CD8-positive, alpha-beta T cell (primary cell): ENCODE measurements at regions of chr7 and their contacts with region 1.

Region 1: GRCh38 chr7:143299840-143300239 is 11.7 kb downstream of the CASP2 start:
- DNase-seq: peak; percentile 42 to 76 (median 69)
- ATAC-seq: peak; percentile 100
- H3K4me3 ChIP-seq: no peak overlapping the region
- H3K4me3 Mint-ChIP-seq: no peak overlapping the region
- H3K27ac ChIP-seq: no peak overlapping the region
- H3K27ac Mint-ChIP-seq: no peak overlapping the region
- H3K4me1 ChIP-seq: peaks cover 9% of the 10 kb centered on the region
- H3K4me1 Mint-ChIP-seq: peaks cover 31% of the 10 kb centered on the region
- H3K27me3 ChIP-seq: no peaks in the 10 kb centered on the region
- H3K27me3 Mint-ChIP-seq: no peaks in the 10 kb centered on the region
- CTCF ChIP-seq: peak; percentile 80

Region 2: GRCh38 chr7:142898377-142899170 is 401.3 kb before region 1 on chr7:
- CTCF ChIA-PET with region 1: no interaction called
- POLR2A ChIA-PET with region 1: no interaction called
- intact Hi-C with region 1: no loop called
- DNase-seq: no peak
- ATAC-seq: no peak
- H3K4me3 ChIP-seq: no peak overlapping the region
- H3K4me3 Mint-ChIP-seq: no peak overlapping the region
- H3K27ac ChIP-seq: no peak overlapping the region
- H3K27ac Mint-ChIP-seq: no peak overlapping the region
- H3K4me1 ChIP-seq: no peaks in the 10 kb centered on the region
- H3K4me1 Mint-ChIP-seq: no peaks in the 10 kb centered on the region
- H3K27me3 ChIP-seq: peaks cover 0 to 4% of the 10 kb centered on the region in 2 experiments
- H3K27me3 Mint-ChIP-seq: peaks cover 8% of the 10 kb centered on the region
- CTCF ChIP-seq: no peak

Region 3: GRCh38 chr7:143248761-143249354 is 51.0 kb before region 1 on chr7:
- CTCF ChIA-PET with region 1: interaction called, 180 read pairs
- POLR2A ChIA-PET with region 1: interaction called, 5 read pairs
- intact Hi-C with region 1: no loop called
- DNase-seq: no peak
- ATAC-seq: no peak
- H3K4me3 ChIP-seq: no peak overlapping the region
- H3K4me3 Mint-ChIP-seq: no peak overlapping the region
- H3K27ac ChIP-seq: no peak overlapping the region
- H3K27ac Mint-ChIP-seq: peak overlapping the region; percentile 73
- H3K4me1 ChIP-seq: peaks cover 60% of the 10 kb centered on the region
- H3K4me1 Mint-ChIP-seq: peaks cover 79% of the 10 kb centered on the region
- H3K27me3 ChIP-seq: no peaks in the 10 kb centered on the region
- H3K27me3 Mint-ChIP-seq: no peaks in the 10 kb centered on the region
- CTCF ChIP-seq: no peak

Region 4: DNA sequence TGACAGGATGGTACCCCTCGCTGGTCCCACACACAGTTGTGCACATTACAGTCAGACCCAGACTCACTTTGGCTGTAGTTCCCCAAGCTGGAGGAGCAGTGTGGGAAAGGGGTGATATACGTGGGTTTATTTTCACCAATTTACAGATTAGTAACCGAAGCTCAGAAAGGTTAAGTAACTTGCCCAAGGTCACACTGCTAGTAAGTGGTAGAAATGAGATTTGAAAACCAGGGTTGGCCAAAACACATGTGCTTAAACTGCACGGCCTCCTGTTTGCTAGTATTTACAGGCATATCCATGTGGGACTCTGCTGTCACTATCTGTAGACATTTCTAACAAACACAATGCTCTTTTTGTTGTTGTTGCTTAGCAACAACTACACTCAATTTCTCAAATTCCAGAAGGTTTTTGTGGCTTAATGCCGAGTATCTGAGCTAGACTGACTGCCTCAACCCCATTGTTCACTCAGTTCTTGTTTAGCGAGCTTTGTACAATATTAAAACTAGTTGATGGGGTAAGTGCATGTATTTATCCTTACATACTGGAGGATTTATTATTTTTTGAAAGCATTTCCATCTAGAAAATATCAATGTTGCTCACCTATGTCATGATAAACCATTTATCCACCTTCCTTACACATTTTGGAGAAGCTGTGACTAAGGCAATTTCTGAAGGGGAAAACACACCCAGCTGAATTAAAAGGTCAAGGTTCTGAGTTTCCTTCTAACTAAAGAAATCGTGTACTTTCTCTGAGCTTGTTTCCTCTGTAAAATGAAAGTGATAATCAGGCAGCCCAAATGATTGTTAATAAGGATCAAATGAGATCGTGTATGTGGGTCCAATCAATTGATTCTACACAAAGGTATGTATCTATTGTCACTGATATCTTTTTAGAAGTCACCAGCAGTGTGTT is 20.4 kb before region 1 on chr7:
- CTCF ChIA-PET with region 1: interaction called, 12 read pairs
- POLR2A ChIA-PET with region 1: no interaction called
- intact Hi-C with region 1: no loop called
- DNase-seq: peak in 2 of 9 experiments; percentile 43 to 64
- ATAC-seq: peak; percentile 63
- H3K4me3 ChIP-seq: peak overlapping the region in 1 of 2 experiments; percentile 4
- H3K4me3 Mint-ChIP-seq: peak overlapping the region; percentile 70
- H3K27ac ChIP-seq: peak overlapping the region; percentile 4 to 54
- H3K27ac Mint-ChIP-seq: peak overlapping the region; percentile 82
- H3K4me1 ChIP-seq: peaks cover 24% of the 10 kb centered on the region
- H3K4me1 Mint-ChIP-seq: peaks cover 34% of the 10 kb centered on the region
- H3K27me3 ChIP-seq: no peaks in the 10 kb centered on the region
- H3K27me3 Mint-ChIP-seq: no peaks in the 10 kb centered on the region
- CTCF ChIP-seq: no peak

Region 5: GRCh38 chr7:143287935-143288826 is 11.7 kb before region 1 on chr7 and contains the start of gene CASP2:
- CTCF ChIA-PET with region 1: interaction called, 20 read pairs
- POLR2A ChIA-PET with region 1: interaction called, 4 read pairs
- intact Hi-C with region 1: loop called in 1 of 2 experiments (anchors 1 kb)
- DNase-seq: peak; percentile 96 to 100 (median 99)
- ATAC-seq: peak; percentile 96
- H3K4me3 ChIP-seq: peak within 1 kb of the TSS; percentile 91 to 95
- H3K4me3 Mint-ChIP-seq: peak within 1 kb of the TSS; percentile 93
- H3K27ac ChIP-seq: peak within 1 kb of the TSS; percentile 64 to 72
- H3K27ac Mint-ChIP-seq: peak within 1 kb of the TSS; percentile 91
- H3K4me1 ChIP-seq: peaks cover 40% of the 10 kb centered on the region
- H3K4me1 Mint-ChIP-seq: peaks cover 53% of the 10 kb centered on the region
- H3K27me3 ChIP-seq: no peaks in the 10 kb centered on the region
- H3K27me3 Mint-ChIP-seq: no peaks in the 10 kb centered on the region
- CTCF ChIP-seq: peak; percentile 31
- total RNA-seq, gene CASP2: 16.0 to 19.1 TPM

Region 6: GRCh38 chr7:143337216-143337615 is 37.4 kb after region 1 on chr7:
- CTCF ChIA-PET with region 1: interaction called, 10 read pairs
- POLR2A ChIA-PET with region 1: no interaction called
- intact Hi-C with region 1: no loop called
- DNase-seq: no peak
- ATAC-seq: no peak
- H3K4me3 ChIP-seq: no peak overlapping the region
- H3K4me3 Mint-ChIP-seq: no peak overlapping the region
- H3K27ac ChIP-seq: no peak overlapping the region
- H3K27ac Mint-ChIP-seq: no peak overlapping the region
- H3K4me1 ChIP-seq: no peaks in the 10 kb centered on the region
- H3K4me1 Mint-ChIP-seq: no peaks in the 10 kb centered on the region
- H3K27me3 ChIP-seq: peaks cover 0 to 6% of the 10 kb centered on the region in 2 experiments
- H3K27me3 Mint-ChIP-seq: peaks cover 22% of the 10 kb centered on the region
- CTCF ChIP-seq: no peak

Region 7: GRCh38 chr7:143372070-143372469 is 72.2 kb after region 1 on chr7:
- CTCF ChIA-PET with region 1: interaction called, 24 read pairs
- POLR2A ChIA-PET with region 1: no interaction called
- intact Hi-C with region 1: loop called in 1 of 2 experiments (anchors 5 kb)
- DNase-seq: peak; percentile 36 to 81 (median 71)
- ATAC-seq: peak; percentile 33
- H3K4me3 ChIP-seq: no peak overlapping the region
- H3K4me3 Mint-ChIP-seq: peak overlapping the region; percentile 24
- H3K27ac ChIP-seq: peak overlapping the region in 1 of 2 experiments; percentile 36
- H3K27ac Mint-ChIP-seq: peak overlapping the region; percentile 75
- H3K4me1 ChIP-seq: peaks cover 58% of the 10 kb centered on the region
- H3K4me1 Mint-ChIP-seq: peaks cover 55% of the 10 kb centered on the region
- H3K27me3 ChIP-seq: no peaks in the 10 kb centered on the region
- H3K27me3 Mint-ChIP-seq: no peaks in the 10 kb centered on the region
- CTCF ChIP-seq: peak; percentile 18

Region 8: DNA sequence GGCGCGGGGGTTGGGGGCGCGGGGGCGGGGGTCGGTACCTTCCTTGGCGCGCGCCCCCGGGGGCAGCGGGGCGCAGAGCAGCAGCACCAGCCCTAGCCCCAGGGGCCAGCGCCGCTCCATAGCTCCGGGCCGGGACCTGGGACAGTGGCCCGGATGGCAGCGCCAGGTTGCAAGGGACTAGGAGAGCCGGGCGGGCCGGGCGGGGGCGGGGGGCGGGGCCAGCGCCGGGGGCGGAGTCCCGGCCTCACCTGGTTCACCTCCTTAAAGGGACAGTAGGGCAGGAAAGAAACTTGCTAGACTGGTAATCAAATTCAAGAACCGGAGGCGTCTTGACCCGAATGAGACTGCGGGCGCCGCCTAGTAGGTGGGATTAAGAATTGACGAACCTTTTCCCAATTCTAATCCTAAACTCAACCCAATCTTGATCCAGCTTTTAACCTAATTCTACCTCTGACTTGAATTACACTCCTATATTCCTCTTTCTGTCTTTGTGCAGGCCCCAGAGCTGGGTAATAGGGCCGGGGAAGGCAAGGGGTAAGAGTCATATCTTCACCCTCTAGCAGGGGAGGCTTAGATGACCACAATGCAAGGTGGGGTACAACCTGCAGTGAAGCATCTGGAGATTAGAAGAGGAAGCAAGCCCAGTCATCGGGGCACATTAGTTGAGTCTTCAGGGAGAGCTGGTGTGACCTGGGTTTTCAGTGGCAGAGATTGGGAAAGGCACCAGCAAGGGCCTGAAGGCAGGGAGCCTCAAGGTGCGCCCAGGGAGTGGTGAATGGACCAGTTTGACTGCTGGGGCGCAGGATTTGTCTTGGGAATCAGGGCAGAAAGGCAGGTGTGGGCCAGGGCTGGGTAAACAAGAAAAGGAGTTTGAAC is 109.1 kb after region 1 on chr7 and contains the start of gene EPHA1:
- CTCF ChIA-PET with region 1: interaction called, 9 read pairs
- POLR2A ChIA-PET with region 1: interaction called, 3 read pairs
- intact Hi-C with region 1: loop called (anchors 5 kb)
- DNase-seq: peak; percentile 14 to 77 (median 52)
- ATAC-seq: peak; percentile 71
- H3K4me3 ChIP-seq: peak within 1 kb of the TSS; percentile 56 to 58
- H3K4me3 Mint-ChIP-seq: peak within 1 kb of the TSS; percentile 95
- H3K27ac ChIP-seq: peak within 1 kb of the TSS; percentile 22 to 38
- H3K27ac Mint-ChIP-seq: peak within 1 kb of the TSS; percentile 91
- H3K4me1 ChIP-seq: peaks cover 48% of the 10 kb centered on the region
- H3K4me1 Mint-ChIP-seq: peaks cover 57% of the 10 kb centered on the region
- H3K27me3 ChIP-seq: peaks cover 0 to 2% of the 10 kb centered on the region in 2 experiments
- H3K27me3 Mint-ChIP-seq: no peaks in the 10 kb centered on the region
- CTCF ChIP-seq: no peak
- total RNA-seq, gene EPHA1: 8.3 to 13.1 TPM